ENCODE measurements at regions of chr16 and their contacts with region 1.

Region 1: GRCh38 chr16:55543472-55543871 is 23.0 kb upstream of the CAPNS2 start:
- DNase-seq: peak in 1 of 2 experiments; percentile 30
- H3K4me3 ChIP-seq: no peak overlapping the region
- H3K4me3 Mint-ChIP-seq: no peak overlapping the region
- H3K27ac Mint-ChIP-seq: no peak overlapping the region
- H3K4me1 ChIP-seq: no peaks in the 10 kb centered on the region; the same call in 1 of the 2 replicates
- H3K4me1 Mint-ChIP-seq: no peaks in the 10 kb centered on the region
- H3K27me3 ChIP-seq: no peaks in the 10 kb centered on the region
- H3K27me3 Mint-ChIP-seq: no peaks in the 10 kb centered on the region
- CTCF ChIP-seq: peak in 1 of 2 experiments; percentile 37

Region 2: DNA sequence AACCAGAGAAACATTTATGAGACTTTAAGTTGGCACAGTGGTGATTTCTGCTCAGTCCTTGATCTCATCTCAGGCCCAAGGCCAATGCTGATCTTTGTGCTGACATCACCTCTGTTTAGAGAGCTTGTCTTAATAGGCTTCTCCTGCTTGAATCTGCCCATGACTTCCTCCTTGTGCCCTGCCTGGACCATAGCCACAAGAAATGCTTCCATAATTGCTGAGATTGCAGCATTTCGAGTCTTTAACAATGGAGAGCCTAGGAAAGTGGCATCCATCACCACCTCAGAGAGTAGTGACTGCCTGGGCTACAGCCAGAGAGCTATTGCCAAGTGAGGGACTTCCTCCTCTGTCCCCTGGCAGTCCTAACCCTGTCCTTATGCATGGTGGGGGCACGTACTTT is 89.6 kb before region 1 on chr16:
- CTCF ChIA-PET with region 1: no interaction called
- POLR2A ChIA-PET with region 1: no interaction called
- intact Hi-C with region 1: no loop called
- DNase-seq: no peak
- H3K4me3 ChIP-seq: no peak overlapping the region
- H3K4me3 Mint-ChIP-seq: no peak overlapping the region
- H3K27ac Mint-ChIP-seq: no peak overlapping the region
- H3K4me1 ChIP-seq: no peaks in the 10 kb centered on the region
- H3K4me1 Mint-ChIP-seq: no peaks in the 10 kb centered on the region
- H3K27me3 ChIP-seq: no peaks in the 10 kb centered on the region
- H3K27me3 Mint-ChIP-seq: no peaks in the 10 kb centered on the region
- CTCF ChIP-seq: no peak

Region 3: DNA sequence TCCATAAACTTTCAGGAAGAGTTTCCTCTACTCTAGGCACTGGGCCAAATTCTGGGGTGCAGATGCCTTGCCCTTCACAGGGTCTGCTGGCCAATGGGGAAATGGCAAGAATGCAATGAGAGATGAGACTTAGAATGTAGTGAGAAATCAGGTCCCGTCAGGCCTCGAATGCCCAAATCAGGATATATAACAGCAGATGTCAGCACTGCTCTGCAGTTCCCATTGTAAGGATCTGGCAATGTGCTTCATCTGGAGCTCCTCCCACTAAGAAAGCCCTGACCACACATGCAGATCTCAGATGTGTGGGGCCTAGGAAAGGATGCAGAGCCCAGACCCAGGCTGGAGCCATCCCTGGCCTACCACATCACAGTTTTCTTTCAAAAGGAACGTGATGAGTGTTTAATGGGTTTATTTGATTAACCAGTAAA is 48.5 kb before region 1 on chr16:
- CTCF ChIA-PET with region 1: interaction called, 5 read pairs
- POLR2A ChIA-PET with region 1: no interaction called
- intact Hi-C with region 1: loop called (anchors 1 kb)
- DNase-seq: peak; percentile 56 to 69
- H3K4me3 ChIP-seq: no peak overlapping the region
- H3K4me3 Mint-ChIP-seq: no peak overlapping the region
- H3K27ac Mint-ChIP-seq: no peak overlapping the region
- H3K4me1 ChIP-seq: peaks cover 9% of the 10 kb centered on the region; the same call in 1 of the 2 replicates
- H3K4me1 Mint-ChIP-seq: peaks cover 7% of the 10 kb centered on the region
- H3K27me3 ChIP-seq: no peaks in the 10 kb centered on the region
- H3K27me3 Mint-ChIP-seq: no peaks in the 10 kb centered on the region
- CTCF ChIP-seq: peak in 1 of 2 experiments; percentile 41